AG04450 (cell line): ENCODE measurements at regions of chr3 and their contacts with region 1.

Region 1: DNA sequence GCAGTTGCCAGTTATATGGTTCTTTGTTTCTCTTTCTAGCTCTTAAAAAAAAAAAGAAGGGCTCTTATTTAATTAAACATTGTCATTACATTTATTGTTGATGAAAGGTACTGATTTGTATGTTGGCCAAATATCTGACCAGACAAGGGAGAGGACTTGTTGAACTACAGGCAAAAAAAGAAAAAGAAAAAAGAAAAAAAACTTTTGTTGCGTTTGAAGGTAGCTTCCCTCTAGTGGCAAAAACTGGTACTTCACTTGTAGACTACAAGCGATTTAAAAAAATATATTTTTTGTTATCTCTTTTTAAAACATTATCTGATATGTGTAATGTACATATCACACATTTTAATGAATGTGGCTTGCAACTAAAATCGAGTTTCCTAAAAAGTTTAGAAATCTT is 280.6 kb downstream of the ROBO2 start:
- DNase-seq: peak; percentile 33
- H3K4me3 ChIP-seq: no peak overlapping the region
- H3K27ac ChIP-seq: no peak overlapping the region
- H3K27me3 ChIP-seq: no peaks in the 10 kb centered on the region
- CTCF ChIP-seq: peak; percentile 80

Region 2: GRCh38 chr3:76362643-76363042 is 957.9 kb before region 1 on chr3:
- CTCF ChIA-PET with region 1: no interaction called
- POLR2A ChIA-PET with region 1: no interaction called
- DNase-seq: no peak
- H3K4me3 ChIP-seq: no peak overlapping the region
- H3K27ac ChIP-seq: no peak overlapping the region
- H3K27me3 ChIP-seq: no peaks in the 10 kb centered on the region
- CTCF ChIP-seq: no peak

Region 3: DNA sequence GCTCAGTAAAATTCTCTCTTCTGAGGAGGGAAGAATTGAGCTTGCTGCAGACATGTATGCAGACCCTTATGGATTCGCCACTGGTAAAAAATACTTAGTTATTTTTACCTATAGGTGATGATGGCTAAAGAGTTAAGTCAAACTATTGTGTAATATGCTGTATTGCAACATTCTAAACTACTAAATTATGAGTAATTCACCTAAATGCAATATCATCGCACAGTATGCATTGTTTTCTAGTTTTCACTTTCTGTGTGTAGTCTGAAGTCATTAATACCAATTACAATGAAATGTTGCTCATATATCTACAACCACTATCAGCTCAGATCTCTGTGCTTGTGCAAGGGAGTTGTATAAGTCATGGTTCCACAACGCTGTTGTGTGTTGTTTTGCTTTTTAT is 329.3 kb before region 1 on chr3:
- CTCF ChIA-PET with region 1: no interaction called
- POLR2A ChIA-PET with region 1: no interaction called
- DNase-seq: no peak
- H3K4me3 ChIP-seq: no peak overlapping the region
- H3K27ac ChIP-seq: no peak overlapping the region
- H3K27me3 ChIP-seq: no peaks in the 10 kb centered on the region
- CTCF ChIP-seq: no peak

Region 4: DNA sequence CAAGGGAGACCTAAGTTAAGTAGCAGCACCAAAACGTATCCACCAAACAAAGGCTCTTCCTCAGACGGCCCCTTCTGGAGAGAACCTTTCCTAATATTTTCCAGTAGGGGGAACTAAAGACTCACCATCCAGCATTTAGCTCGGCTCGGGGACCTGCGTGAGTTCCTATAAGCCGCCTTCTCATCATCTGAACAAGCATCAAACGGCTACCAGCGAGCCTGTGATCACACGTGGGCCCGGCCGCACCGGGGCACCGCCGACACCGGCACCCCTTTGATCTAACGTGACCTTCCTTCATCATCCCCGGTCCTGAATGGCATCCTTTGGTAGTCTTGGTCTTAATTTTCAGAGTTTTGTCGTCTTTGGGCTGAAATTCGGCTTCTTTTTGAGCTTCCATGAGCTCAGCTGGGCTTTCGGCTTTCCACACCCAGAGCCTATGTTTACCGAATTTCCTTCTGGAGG is 282.0 kb before region 1 on chr3:
- CTCF ChIA-PET with region 1: interaction called, 45 read pairs
- POLR2A ChIA-PET with region 1: no interaction called
- DNase-seq: peak; percentile 70
- H3K4me3 ChIP-seq: peak overlapping the region; percentile 64
- H3K27ac ChIP-seq: no peak overlapping the region
- H3K27me3 ChIP-seq: peaks cover 8% of the 10 kb centered on the region
- CTCF ChIP-seq: peak; percentile 76

Region 5: GRCh38 chr3:77283108-77283507 is 37.4 kb before region 1 on chr3:
- CTCF ChIA-PET with region 1: interaction called, 18 read pairs
- POLR2A ChIA-PET with region 1: no interaction called
- DNase-seq: no peak
- H3K4me3 ChIP-seq: no peak overlapping the region
- H3K27ac ChIP-seq: no peak overlapping the region
- H3K27me3 ChIP-seq: no peaks in the 10 kb centered on the region
- CTCF ChIP-seq: no peak

Region 6: DNA sequence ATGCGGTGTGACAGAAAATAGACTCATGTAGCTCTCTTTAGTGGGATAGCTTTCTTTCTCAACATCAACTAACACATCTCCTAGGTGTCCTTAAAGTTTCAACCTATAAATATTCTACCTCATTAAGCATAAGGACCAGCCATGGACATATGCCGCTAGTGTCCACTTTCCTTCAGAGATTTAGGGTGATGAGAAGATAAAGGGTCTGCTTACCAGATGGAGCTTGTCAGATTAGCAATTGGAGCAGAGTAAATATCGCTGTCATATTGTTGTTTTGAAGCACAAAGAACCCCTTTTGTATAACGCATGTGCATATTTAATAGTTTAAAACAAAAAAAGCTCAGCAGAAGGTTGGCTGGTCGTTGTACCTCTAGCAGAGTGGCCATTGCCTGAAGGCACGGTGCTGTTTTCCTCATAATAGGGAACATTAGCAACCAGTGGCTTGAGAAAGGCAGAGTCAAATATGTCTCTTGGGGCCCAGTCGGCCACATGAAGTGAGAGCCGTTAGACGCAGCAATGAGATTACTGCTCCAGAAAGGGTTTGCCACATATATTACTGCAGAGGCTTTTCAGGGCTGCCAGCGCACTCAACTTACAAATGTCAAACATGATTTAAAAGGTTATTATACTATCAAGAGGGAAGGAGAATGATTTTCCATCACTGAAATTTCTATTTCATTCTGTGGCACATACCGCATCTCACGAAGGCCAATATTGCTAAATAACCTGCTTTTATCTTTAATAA is 16.4 kb before region 1 on chr3:
- CTCF ChIA-PET with region 1: interaction called, 54 read pairs
- POLR2A ChIA-PET with region 1: no interaction called
- DNase-seq: no peak
- H3K4me3 ChIP-seq: no peak overlapping the region
- H3K27ac ChIP-seq: no peak overlapping the region
- H3K27me3 ChIP-seq: no peaks in the 10 kb centered on the region
- CTCF ChIP-seq: no peak

Region 7: GRCh38 chr3:77338195-77338594 is 17.7 kb after region 1 on chr3:
- CTCF ChIA-PET with region 1: interaction called, 18 read pairs
- POLR2A ChIA-PET with region 1: no interaction called
- DNase-seq: no peak
- H3K4me3 ChIP-seq: no peak overlapping the region
- H3K27ac ChIP-seq: no peak overlapping the region
- H3K27me3 ChIP-seq: no peaks in the 10 kb centered on the region
- CTCF ChIP-seq: no peak

Region 8: DNA sequence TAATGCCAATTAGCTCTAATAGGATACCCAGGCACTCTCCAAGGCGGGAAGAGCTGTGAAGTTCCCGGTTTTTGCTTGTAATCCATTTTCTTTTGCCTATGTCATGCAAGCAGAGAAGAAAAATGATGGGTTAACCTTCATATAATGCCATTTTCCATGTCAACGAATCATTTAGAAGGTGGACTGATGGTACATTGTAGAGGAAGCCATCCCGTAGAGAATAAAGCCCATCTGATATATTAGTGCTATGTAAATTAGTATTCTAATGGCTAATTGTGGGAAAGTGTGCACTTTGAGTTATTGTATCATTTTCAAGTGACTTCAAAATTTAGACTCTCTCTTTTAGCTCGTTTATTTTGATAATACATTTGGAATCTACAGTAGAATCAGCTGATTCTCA is 228.5 kb after region 1 on chr3:
- CTCF ChIA-PET with region 1: no interaction called
- POLR2A ChIA-PET with region 1: no interaction called
- DNase-seq: no peak
- H3K4me3 ChIP-seq: no peak overlapping the region
- H3K27ac ChIP-seq: no peak overlapping the region
- H3K27me3 ChIP-seq: no peaks in the 10 kb centered on the region
- CTCF ChIP-seq: no peak